GM12878 (cell line): ENCODE measurements at regions of chr3 and their contacts with region 1.

Region 1: GRCh38 chr3:61864886-61865285 is 303.5 kb downstream of the PTPRG start:
- DNase-seq: no peak
- ATAC-seq: no peak
- H3K4me3 ChIP-seq: no peak overlapping the region
- H3K27ac ChIP-seq: no peak overlapping the region
- H3K4me1 ChIP-seq: no peaks in the 10 kb centered on the region
- H3K27me3 ChIP-seq: no peaks in the 10 kb centered on the region
- CTCF ChIP-seq: no peak
- EP300 ChIP-seq: no peak
- POLR2A ChIP-seq: no peak
- RAD21 ChIP-seq: no peak

Region 2: GRCh38 chr3:61877348-61878138 is 12.7 kb after region 1 on chr3:
- CTCF ChIA-PET with region 1: interaction called, 4 read pairs
- POLR2A ChIA-PET with region 1: interaction called, 3 read pairs
- RAD21 ChIA-PET with region 1: interaction called, 10 read pairs
- SMC1A ChIA-PET with region 1: interaction called, 17 read pairs
- in situ Hi-C with region 1: no loop called
- intact Hi-C with region 1: no loop called
- DNase-seq: peak; percentile 17
- ATAC-seq: peak; percentile 88
- H3K4me3 ChIP-seq: no peak overlapping the region
- H3K27ac ChIP-seq: no peak overlapping the region
- H3K4me1 ChIP-seq: no peaks in the 10 kb centered on the region
- H3K27me3 ChIP-seq: no peaks in the 10 kb centered on the region; a peak in 2 of 4 replicates
- CTCF ChIP-seq: no peak; a peak in 1 of 6 replicates
- EP300 ChIP-seq: peak in 1 of 2 experiments; percentile 30; a peak in 1 of 4 replicates
- POLR2A ChIP-seq: no peak
- RAD21 ChIP-seq: no peak

Region 3: GRCh38 chr3:61927332-61927731 is 62.4 kb after region 1 on chr3:
- CTCF ChIA-PET with region 1: interaction called, 7 read pairs
- POLR2A ChIA-PET with region 1: interaction called, 5 read pairs
- RAD21 ChIA-PET with region 1: interaction called, 10 read pairs
- SMC1A ChIA-PET with region 1: interaction called, 135 read pairs
- in situ Hi-C with region 1: no loop called
- intact Hi-C with region 1: no loop called
- DNase-seq: no peak
- ATAC-seq: no peak; the same call in 1 of the 3 replicates
- H3K4me3 ChIP-seq: no peak overlapping the region
- H3K27ac ChIP-seq: no peak overlapping the region
- H3K4me1 ChIP-seq: no peaks in the 10 kb centered on the region
- H3K27me3 ChIP-seq: no peaks in the 10 kb centered on the region; a peak in 1 of 4 replicates
- CTCF ChIP-seq: no peak
- EP300 ChIP-seq: no peak
- POLR2A ChIP-seq: no peak
- RAD21 ChIP-seq: no peak

Region 4: GRCh38 chr3:62131592-62131991 is 266.7 kb after region 1 on chr3:
- CTCF ChIA-PET with region 1: interaction called, 13 read pairs
- POLR2A ChIA-PET with region 1: no interaction called
- RAD21 ChIA-PET with region 1: interaction called, 3 read pairs
- SMC1A ChIA-PET with region 1: interaction called, 8 read pairs
- in situ Hi-C with region 1: no loop called
- intact Hi-C with region 1: no loop called
- DNase-seq: no peak
- ATAC-seq: peak; percentile 61
- H3K4me3 ChIP-seq: no peak overlapping the region
- H3K27ac ChIP-seq: no peak overlapping the region
- H3K4me1 ChIP-seq: no peaks in the 10 kb centered on the region
- H3K27me3 ChIP-seq: no peaks in the 10 kb centered on the region
- CTCF ChIP-seq: peak in 2 of 3 experiments; percentile 26 to 34; a peak in 2 of 6 replicates
- EP300 ChIP-seq: no peak
- POLR2A ChIP-seq: no peak
- RAD21 ChIP-seq: 0 out of 2 replicates have a peak, but pooled peaks have one; percentile 19